CD4-positive, alpha-beta T cell (primary cell): ENCODE measurements at regions of chr20 and their contacts with region 1.

Region 1: DNA sequence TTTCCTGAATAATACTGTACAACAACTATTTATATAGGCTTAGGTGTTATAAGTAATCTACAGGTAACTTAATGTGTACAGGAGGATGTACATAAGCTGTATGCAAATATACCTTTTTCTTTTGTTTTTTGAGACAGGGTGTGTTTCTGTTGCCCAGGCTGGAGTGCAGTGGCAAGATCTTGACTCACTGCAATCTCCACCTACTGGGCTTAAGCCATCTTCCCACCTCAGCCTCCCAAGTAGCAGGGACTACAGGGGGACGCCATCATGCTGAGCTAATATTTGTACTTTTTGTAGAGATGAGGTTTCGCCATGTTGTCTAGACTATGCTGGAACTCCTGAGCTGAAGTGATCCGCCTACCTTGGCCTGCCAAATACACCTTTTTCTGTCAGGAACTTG is 191.7 kb upstream of the ZNF217 start:
- DNase-seq: no peak
- ATAC-seq: no peak
- H3K4me3 ChIP-seq: no peak overlapping the region
- H3K4me3 Mint-ChIP-seq: no peak overlapping the region
- H3K27ac ChIP-seq: no peak overlapping the region
- H3K27ac Mint-ChIP-seq: no peak overlapping the region
- H3K4me1 ChIP-seq: no peaks in the 10 kb centered on the region
- H3K4me1 Mint-ChIP-seq: peaks cover 13% of the 10 kb centered on the region
- H3K27me3 ChIP-seq: no peaks in the 10 kb centered on the region
- H3K27me3 Mint-ChIP-seq: no peaks in the 10 kb centered on the region
- CTCF ChIP-seq: no peak

Region 2: GRCh38 chr20:53805895-53806384 is 20.6 kb after region 1 on chr20:
- CTCF ChIA-PET with region 1: no interaction called
- POLR2A ChIA-PET with region 1: no interaction called
- intact Hi-C with region 1: loop called in 1 of 2 experiments (anchors 2 kb)
- DNase-seq: no peak
- ATAC-seq: no peak
- H3K4me3 ChIP-seq: no peak overlapping the region
- H3K4me3 Mint-ChIP-seq: no peak overlapping the region
- H3K27ac ChIP-seq: no peak overlapping the region
- H3K27ac Mint-ChIP-seq: no peak overlapping the region
- H3K4me1 ChIP-seq: no peaks in the 10 kb centered on the region
- H3K4me1 Mint-ChIP-seq: no peaks in the 10 kb centered on the region
- H3K27me3 ChIP-seq: no peaks in the 10 kb centered on the region
- H3K27me3 Mint-ChIP-seq: no peaks in the 10 kb centered on the region
- CTCF ChIP-seq: no peak